ENCODE measurements at regions of chr11 and their contacts with region 1.

Region 1: GRCh38 chr11:66311965-66312548 is 4.8 kb downstream of the CD248 start:
- DNase-seq: peak; percentile 93
- H3K4me3 Mint-ChIP-seq: peak overlapping the region; percentile 95
- H3K27ac Mint-ChIP-seq: peak overlapping the region; percentile 94
- H3K4me1 Mint-ChIP-seq: peaks cover 14% of the 10 kb centered on the region
- H3K27me3 Mint-ChIP-seq: peaks cover 3% of the 10 kb centered on the region

Region 2: GRCh38 chr11:66222358-66223149 is 89.5 kb before region 1 on chr11:
- intact Hi-C with region 1: loop called (anchors 1 kb)
- DNase-seq: peak; percentile 92
- H3K4me3 Mint-ChIP-seq: peak overlapping the region; percentile 20
- H3K27ac Mint-ChIP-seq: peak overlapping the region; percentile 97
- H3K4me1 Mint-ChIP-seq: peaks cover 20% of the 10 kb centered on the region
- H3K27me3 Mint-ChIP-seq: no peaks in the 10 kb centered on the region

Region 3: GRCh38 chr11:66328307-66329144 is 16.5 kb after region 1 on chr11:
- intact Hi-C with region 1: loop called (anchors 1 kb)
- DNase-seq: peak; percentile 73
- H3K4me3 Mint-ChIP-seq: peak overlapping the region; percentile 59
- H3K27ac Mint-ChIP-seq: peak overlapping the region; percentile 61
- H3K4me1 Mint-ChIP-seq: peaks cover 25% of the 10 kb centered on the region
- H3K27me3 Mint-ChIP-seq: no peaks in the 10 kb centered on the region

Region 4: GRCh38 chr11:66371627-66372415 is 59.8 kb after region 1 on chr11 and contains the start of gene SLC29A2:
- intact Hi-C with region 1: loop called (anchors 1 kb)
- DNase-seq: peak; percentile 71
- H3K4me3 Mint-ChIP-seq: peak within 1 kb of the TSS; percentile 89
- H3K27ac Mint-ChIP-seq: peak within 1 kb of the TSS; percentile 86
- H3K4me1 Mint-ChIP-seq: peaks cover 9% of the 10 kb centered on the region
- H3K27me3 Mint-ChIP-seq: peaks cover 3% of the 10 kb centered on the region
- total RNA-seq, gene SLC29A2: 14.3 and 16.6 TPM in 2 replicates

Region 5: DNA sequence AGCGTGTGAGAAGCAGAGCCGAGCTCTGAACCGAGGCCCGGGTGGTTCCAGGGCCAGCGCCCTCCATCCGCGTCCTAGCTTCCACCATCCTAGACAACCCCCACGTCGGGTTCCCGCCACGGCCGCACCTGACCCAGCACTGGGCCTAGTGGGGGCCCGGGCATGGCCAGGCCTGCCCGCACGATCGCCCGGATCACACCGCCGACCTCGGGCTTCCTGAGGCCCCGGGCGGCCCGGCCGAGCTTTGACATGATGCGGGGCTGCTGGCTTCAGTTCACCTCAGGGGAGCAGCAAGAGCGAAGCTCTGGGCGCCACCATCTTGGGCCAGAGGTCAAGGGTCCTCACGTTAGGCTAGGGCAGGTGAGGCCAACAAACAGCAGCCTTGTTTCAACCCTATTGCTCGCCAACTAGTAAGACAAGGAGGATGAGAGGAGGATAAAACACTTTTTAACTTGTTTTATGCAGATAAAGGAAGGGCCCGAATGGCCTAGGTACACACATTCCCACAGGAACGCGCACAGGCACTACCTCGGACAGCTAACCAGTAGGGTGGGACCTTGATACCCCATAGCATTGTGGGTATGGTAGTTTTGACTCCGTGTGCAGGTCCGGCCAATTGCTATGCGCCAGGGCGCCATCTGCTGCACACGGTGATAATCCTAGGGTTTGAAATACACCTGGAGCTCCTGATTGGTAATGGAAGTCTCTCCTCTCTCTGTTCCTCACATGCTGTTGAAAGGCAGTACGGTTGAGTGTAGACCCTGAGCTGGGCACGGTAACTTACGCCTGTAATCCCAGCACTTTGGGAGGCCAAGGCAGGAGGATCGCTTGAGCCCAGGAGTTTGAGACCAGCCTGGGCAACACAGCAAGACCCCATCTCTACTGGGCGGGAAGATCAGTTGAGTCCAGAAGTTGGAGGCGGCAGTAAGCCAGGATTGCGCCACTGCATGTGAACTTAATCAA is 126.7 kb after region 1 on chr11 and contains the start of gene MRPL11:
- intact Hi-C with region 1: loop called (anchors 2 kb)
- DNase-seq: peak; percentile 83
- H3K4me3 Mint-ChIP-seq: peak within 1 kb of the TSS; percentile 87
- H3K27ac Mint-ChIP-seq: peak within 1 kb of the TSS; percentile 95
- H3K4me1 Mint-ChIP-seq: peaks cover 17% of the 10 kb centered on the region
- H3K27me3 Mint-ChIP-seq: no peaks in the 10 kb centered on the region
- total RNA-seq, gene MRPL11: 93.0 and 93.6 TPM in 2 replicates